ENCODE measurements at regions of chr10 and their contacts with region 1.

Region 1: GRCh38 chr10:116272440-116273283 is at the start of gene GFRA1:
- DNase-seq: peak; percentile 38 to 75 (median 71)
- ATAC-seq: peak; percentile 33 to 36
- H3K4me3 ChIP-seq: peak within 1 kb of the TSS; percentile 75
- H3K27ac ChIP-seq: no peak within 1 kb of the TSS
- H3K4me1 ChIP-seq: no peaks in the 10 kb centered on the region
- H3K27me3 ChIP-seq: no peaks in the 10 kb centered on the region
- total RNA-seq, gene GFRA1: 4.5 to 8.3 (median 7.1) TPM

Region 2: GRCh38 chr10:115948465-115948864 is 324.2 kb before region 1 on chr10:
- intact Hi-C with region 1: loop called in 1 of 4 experiments (anchors 10 kb)
- DNase-seq: no peak
- ATAC-seq: peak; percentile 39 to 64
- H3K4me3 ChIP-seq: no peak overlapping the region
- H3K27ac ChIP-seq: no peak overlapping the region
- H3K4me1 ChIP-seq: peaks cover 1% of the 10 kb centered on the region
- H3K27me3 ChIP-seq: no peaks in the 10 kb centered on the region

Region 3: GRCh38 chr10:116132780-116133399 is 139.8 kb before region 1 on chr10:
- intact Hi-C with region 1: no loop called
- DNase-seq: no peak
- ATAC-seq: no peak
- H3K4me3 ChIP-seq: no peak overlapping the region
- H3K27ac ChIP-seq: no peak overlapping the region
- H3K4me1 ChIP-seq: no peaks in the 10 kb centered on the region
- H3K27me3 ChIP-seq: no peaks in the 10 kb centered on the region